Posterior vena cava (tissue), 2 donors: ENCODE measurements at regions of chr7 and their contacts with region 1.

Region 1: DNA sequence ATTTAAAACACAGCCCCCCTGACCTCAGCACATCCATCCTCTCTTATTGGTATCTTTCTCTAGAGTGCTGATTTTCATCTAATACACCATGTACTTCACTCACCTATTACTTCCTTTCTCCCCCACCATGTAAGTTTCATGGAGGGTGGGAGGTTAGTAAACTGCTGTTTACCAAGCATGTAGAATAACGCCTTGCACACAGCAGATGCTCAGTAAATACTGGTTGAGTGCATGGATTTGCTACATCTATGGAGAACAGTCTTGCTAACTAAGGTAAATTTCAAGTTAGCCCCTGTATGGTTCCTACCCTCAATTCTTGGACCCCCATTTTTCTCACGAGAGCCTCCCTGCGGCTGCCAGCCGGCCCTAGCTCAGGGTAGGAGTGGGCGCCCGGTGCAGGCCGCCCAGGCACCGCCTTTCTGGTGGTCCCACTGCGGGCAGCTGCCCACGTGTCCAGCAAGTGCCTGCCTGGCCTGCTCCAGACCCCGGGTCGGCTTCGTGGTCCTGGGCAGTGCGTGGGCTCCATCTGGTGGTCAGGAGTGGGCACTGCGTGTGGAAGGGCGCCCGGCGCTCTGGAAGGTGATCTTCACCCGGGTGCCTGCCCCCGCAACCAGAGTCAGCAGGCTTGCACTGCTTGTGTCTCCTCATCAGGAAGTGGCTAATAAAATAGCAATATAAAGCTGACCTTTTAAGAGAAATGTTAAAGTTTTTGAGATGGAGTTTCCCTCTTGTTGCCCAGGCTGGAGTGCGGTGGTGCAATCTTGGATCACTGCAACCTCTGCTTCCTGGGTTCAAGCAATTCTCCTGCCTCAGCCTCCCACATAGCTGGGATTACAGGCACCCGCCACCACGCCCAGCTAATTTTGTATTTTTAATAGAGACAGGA is 63.4 kb upstream of the DNAJB6 start:
- DNase-seq: peak; percentile 89

Region 2: GRCh38 chr7:155426543-155427410 is 1846.7 kb before region 1 on chr7:
- intact Hi-C with region 1: no loop called
- DNase-seq: peak; percentile 63

Region 3: DNA sequence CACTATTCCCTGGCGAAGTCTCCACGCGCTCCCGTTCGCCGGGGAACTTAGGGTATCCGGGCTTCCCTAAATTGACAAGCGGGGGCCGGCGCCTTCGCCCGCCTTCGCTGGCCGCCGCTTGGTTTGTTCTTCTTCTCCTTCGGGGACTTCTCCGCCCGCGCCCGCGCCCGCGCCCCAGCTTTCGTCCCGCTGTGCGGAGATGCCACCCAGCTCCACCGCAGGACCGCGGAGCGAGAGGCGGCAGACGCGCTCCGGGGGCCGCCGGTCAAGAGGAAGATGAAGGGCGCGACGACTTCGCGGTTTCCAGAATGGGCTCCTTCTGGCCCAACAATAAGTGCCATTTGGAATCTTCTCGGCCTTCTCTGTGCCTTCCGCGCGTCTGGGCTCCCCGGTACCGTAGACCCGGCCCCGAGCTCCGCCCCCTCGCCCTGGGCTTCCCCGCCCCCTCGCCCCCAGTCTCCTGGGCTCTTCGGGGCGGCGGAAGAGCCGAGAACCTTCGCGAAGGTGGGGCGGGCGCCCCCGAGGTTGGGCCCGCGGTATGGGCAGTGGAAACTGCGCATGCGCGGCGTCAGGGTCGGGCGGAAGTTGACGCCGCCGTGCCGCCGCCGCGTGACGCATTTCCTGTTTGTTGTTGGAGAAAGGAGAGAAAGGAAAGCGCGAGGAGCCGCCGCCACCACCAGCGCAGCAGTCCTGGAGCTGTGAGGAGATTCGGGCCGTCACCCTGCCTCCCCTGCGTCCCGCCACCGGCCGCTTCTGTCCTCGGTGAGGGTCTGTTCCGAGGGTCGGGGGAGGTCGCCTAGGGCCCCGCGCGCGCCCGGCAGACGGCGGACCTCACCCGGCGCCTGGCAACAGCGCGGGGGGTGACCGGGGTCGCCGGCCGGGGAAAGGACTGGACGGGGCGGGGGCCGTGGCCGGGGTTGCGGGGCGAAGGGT is 63.2 kb after region 1 on chr7 and contains the start of gene DNAJB6:
- intact Hi-C with region 1: loop called in 1 of 2 experiments (anchors 5 kb)
- DNase-seq: peak; percentile 98
- total RNA-seq, gene DNAJB6: 105 to 118 TPM